Activated naive CD4-positive, alpha-beta T cell treated with anti-CD3 and anti-CD28 coated beads for 36 hours (primary cell): ENCODE measurements at regions of chr11 and their contacts with region 1.

Region 1: DNA sequence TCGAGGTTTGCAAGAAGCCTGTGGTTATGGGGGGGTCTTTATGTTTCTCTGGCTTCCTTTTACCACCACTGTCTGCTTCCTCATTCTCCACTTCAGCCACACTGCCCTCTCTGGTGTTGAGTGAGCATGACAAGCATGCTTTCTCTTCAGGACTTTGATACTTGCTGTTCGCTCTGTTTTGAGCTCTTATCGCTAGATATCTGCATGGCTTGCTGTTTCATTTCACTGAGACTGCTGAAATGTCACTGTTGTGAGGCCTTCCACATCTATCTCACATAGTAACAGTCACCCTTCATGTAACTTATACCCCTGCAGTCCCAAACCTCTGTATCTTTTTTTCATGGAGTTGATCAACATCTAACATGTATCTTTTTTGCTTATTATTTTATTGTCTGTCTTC is 59.8 kb downstream of the TMEM135 start:
- DNase-seq: peak; percentile 53
- H3K4me3 Mint-ChIP-seq: no peak overlapping the region
- H3K27ac Mint-ChIP-seq: no peak overlapping the region
- H3K4me1 Mint-ChIP-seq: peaks cover 4% of the 10 kb centered on the region
- H3K27me3 Mint-ChIP-seq: no peaks in the 10 kb centered on the region

Region 2: DNA sequence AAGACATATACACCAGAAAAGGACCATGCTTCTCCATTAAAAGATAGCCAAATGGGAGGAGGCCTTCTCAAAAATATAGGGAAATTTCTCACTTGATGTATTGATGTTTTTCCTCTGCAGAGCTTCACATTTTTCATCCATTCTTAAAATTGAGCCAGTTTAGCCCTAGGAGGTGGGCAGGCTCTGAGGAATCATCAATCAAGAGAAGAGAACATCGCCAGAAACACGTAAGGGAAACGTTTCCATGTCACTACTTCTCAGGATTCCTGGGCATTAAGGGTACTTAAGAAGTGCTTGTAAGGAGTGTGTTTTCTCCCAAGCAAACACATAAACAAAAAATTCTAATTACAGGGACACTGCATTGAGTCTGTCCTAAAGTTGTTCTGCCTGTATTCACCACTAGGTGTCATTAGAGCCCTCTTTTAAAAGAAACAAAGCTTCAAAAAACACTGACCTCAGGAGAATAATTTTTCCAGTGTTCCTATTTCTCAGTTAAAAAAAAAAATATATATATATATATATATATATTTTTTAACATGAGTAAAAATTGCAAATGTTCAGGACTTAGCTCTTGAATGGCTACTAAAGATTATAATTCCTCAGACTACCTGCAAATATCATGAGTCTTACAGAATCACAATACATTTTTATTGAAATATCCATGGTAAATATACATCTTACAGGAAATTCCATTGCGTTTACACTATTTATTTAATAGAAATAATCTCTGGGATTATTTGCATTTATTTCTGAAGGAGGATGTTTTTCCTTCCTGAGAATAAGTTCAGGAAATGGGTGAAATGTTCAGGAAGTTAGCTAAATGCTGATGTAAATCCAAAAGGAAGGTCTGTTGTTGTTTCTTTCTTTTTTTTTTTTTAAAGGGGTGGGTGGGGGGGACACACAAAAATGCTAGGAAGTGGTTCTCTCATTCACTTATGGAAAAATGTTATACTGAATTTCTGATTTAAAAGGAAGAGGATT is 158.4 kb before region 1 on chr11:
- CTCF ChIA-PET with region 1: interaction called, 3 read pairs
- intact Hi-C with region 1: loop called (anchors 5 kb)
- DNase-seq: no peak
- H3K4me3 Mint-ChIP-seq: no peak overlapping the region
- H3K27ac Mint-ChIP-seq: no peak overlapping the region
- H3K4me1 Mint-ChIP-seq: no peaks in the 10 kb centered on the region
- H3K27me3 Mint-ChIP-seq: peaks cover 6% of the 10 kb centered on the region

Region 3: DNA sequence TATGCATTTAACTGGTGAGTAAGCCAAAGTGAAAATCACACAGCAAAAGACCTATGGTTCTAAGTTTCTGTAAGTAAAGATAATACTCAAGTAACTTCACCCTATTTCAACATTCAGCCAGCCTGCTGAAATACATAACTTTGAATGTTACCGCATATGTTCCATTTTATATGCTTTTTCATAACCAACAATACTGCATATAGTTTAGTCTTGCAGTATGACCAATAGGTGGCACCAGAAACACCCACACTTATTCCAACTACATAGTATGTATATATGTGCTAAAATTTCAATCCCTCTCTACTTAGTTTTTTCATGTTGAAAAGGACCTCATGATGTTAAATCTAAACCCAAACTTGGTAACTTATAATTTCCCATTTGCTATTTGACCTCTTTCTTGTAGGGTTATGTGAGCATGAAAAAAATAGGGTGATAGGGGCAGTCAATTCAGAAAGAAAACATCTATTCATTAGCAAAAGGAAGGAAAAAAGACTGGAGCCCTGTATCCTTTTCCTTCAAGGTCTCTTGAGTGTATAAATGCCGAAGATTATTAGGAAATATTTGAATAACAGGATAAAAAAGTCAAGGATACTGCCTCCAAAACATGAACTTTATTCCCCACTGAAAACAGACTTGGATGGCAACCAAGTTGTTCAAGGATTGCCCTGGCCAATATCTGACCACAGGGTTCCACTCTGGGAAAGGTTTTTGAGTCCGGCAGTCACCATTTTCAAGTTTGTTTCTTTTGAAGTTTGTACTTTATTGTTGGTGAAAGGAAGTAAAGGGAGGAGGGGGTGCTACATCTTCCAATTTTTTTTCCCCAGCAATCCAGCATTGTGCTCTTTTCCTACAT is 118.6 kb before region 1 on chr11:
- CTCF ChIA-PET with region 1: interaction called, 3 read pairs
- intact Hi-C with region 1: loop called (anchors 1 kb)
- DNase-seq: peak; percentile 19
- H3K4me3 Mint-ChIP-seq: no peak overlapping the region
- H3K27ac Mint-ChIP-seq: no peak overlapping the region
- H3K4me1 Mint-ChIP-seq: no peaks in the 10 kb centered on the region
- H3K27me3 Mint-ChIP-seq: no peaks in the 10 kb centered on the region

Region 4: DNA sequence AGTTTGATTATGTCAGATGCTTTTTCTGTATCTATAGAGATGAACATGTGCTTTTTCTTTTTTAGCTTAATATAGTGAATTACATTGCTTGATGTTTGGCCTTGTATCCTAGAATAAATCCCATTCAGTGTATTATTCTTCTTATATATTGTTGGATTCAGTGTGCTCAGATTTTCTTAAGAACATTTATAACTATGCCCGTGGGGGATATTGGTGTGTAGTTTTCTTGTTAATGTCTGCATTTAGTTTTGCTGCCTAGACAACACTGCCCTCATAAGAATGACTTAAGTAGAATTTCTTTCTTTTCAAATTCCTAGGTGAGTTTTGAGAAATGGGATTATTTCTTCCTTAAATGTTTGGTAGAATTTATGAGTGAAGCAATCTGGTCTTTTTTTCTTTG is 38.7 kb after region 1 on chr11:
- CTCF ChIA-PET with region 1: no interaction called
- intact Hi-C with region 1: no loop called
- DNase-seq: no peak
- H3K4me3 Mint-ChIP-seq: no peak overlapping the region
- H3K27ac Mint-ChIP-seq: no peak overlapping the region
- H3K4me1 Mint-ChIP-seq: no peaks in the 10 kb centered on the region
- H3K27me3 Mint-ChIP-seq: no peaks in the 10 kb centered on the region

Region 5: DNA sequence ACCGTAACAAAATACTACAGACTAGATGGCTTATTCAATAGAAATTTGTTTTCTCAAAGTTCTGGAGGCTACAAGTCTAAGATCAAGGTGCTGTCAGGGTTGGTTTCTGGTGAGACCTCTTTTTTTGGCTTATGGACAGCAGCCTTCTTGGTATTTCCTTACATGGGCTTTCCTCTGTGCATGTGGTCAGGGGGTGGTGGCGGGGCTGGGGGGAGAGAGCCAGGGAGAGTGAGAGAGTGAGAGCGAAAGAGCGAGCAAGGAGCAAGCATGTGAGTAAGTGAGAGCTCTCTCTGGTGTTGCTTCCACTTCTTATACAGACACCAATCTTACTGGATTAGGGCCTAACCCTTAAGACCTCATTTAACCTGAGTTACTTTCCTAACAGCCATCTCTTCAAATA is 121.7 kb after region 1 on chr11:
- CTCF ChIA-PET with region 1: no interaction called
- intact Hi-C with region 1: no loop called
- DNase-seq: no peak
- H3K4me3 Mint-ChIP-seq: no peak overlapping the region
- H3K27ac Mint-ChIP-seq: no peak overlapping the region
- H3K4me1 Mint-ChIP-seq: peaks cover 3% of the 10 kb centered on the region
- H3K27me3 Mint-ChIP-seq: no peaks in the 10 kb centered on the region

Region 6: DNA sequence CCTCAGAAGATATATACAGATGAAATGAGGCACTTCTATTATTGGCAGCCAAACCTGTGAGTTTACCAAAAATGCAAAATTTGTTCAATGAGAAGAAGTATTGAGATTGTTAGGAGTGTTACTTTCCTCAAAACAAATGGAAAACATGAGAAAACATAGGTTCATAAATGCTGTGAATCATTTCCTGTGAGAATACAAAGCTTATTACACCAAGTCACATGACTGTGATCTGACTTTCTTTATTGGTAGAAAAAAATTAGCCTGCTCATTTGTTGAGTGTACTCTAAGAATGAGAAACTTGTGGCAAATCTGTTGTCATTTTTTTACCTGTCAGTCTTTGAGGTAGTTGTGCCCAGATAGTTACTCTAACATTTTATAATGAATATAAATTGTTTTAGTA is 155.3 kb after region 1 on chr11:
- CTCF ChIA-PET with region 1: no interaction called
- intact Hi-C with region 1: no loop called
- DNase-seq: no peak
- H3K4me3 Mint-ChIP-seq: no peak overlapping the region
- H3K27ac Mint-ChIP-seq: peak overlapping the region; percentile 14
- H3K4me1 Mint-ChIP-seq: peaks cover 29% of the 10 kb centered on the region
- H3K27me3 Mint-ChIP-seq: no peaks in the 10 kb centered on the region